BJ (cell line): ENCODE measurements at regions of chr19 and their contacts with region 1.

Region 1: GRCh38 chr19:19176950-19177349 is 6.9 kb upstream of the MEF2B start:
- DNase-seq: no peak
- H3K4me3 ChIP-seq: no peak overlapping the region
- H3K27me3 ChIP-seq: no peaks in the 10 kb centered on the region
- CTCF ChIP-seq: no peak

Region 2: GRCh38 chr19:18961767-18962620 is 215.0 kb before region 1 on chr19:
- CTCF ChIA-PET with region 1: no interaction called
- POLR2A ChIA-PET with region 1: no interaction called
- DNase-seq: no peak
- H3K4me3 ChIP-seq: no peak overlapping the region
- H3K27me3 ChIP-seq: no peaks in the 10 kb centered on the region; the same call in none of the 2 replicates
- CTCF ChIP-seq: no peak

Region 3: DNA sequence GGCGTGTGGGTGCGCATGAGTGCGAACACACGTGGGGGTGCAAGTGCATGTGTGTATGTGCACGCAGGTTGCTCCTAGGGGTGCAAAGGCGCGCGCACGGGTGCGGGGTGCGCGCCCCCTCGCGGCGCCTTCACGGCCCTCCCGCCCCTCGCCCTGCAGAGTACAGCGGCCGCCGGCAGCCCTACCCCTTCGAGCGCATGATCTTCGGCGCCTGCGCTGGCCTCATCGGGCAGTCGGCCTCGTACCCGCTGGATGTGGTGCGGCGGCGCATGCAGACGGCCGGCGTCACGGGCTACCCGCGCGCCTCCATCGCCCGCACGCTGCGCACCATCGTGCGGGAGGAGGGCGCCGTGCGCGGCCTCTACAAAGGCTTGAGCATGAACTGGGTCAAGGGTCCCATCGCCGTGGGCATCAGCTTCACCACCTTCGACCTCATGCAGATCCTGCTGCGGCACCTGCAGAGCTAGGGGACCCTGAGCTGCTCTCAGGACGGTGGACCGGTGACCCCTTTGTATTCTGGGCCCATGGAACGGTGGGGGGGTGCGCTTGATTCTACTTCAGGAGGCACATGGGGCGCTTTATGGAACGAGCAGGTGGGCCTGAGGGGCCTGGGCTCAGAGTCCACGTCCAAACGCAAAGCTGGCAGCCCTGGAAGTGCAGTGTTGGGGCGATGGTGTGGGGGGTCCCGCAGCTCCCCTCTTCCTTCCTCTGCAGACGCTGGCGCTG is 66.4 kb before region 1 on chr19:
- CTCF ChIA-PET with region 1: no interaction called
- POLR2A ChIA-PET with region 1: no interaction called
- DNase-seq: no peak
- H3K4me3 ChIP-seq: no peak overlapping the region
- H3K27me3 ChIP-seq: no peaks in the 10 kb centered on the region
- CTCF ChIP-seq: no peak

Region 4: DNA sequence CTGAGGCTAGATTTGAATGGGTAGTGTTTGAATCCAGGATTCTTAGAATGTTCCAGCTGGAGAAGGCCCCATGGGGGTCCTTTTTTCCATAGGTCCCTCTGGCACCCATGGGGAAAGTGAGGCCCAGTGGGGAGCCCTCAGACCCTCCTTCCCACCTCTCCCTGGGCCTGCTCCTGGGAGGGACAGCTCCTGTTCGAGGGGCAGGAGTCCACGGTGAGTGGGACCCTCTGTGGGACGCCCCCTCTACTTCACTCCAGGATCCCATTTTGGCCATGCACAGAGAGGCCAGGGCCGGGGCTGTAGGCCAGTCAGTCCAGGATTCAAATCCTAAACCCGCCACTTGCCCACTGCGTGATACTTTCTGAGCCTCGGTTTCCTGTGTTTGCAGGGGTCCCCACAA is 14.5 kb before region 1 on chr19:
- CTCF ChIA-PET with region 1: interaction called, 51 read pairs
- POLR2A ChIA-PET with region 1: no interaction called
- DNase-seq: no peak
- H3K4me3 ChIP-seq: no peak overlapping the region
- H3K27me3 ChIP-seq: no peaks in the 10 kb centered on the region
- CTCF ChIP-seq: no peak